Right ventricle myocardium inferior (tissue), 1 donor: ENCODE measurements at regions of chr14 and their contacts with region 1.

Region 1: DNA sequence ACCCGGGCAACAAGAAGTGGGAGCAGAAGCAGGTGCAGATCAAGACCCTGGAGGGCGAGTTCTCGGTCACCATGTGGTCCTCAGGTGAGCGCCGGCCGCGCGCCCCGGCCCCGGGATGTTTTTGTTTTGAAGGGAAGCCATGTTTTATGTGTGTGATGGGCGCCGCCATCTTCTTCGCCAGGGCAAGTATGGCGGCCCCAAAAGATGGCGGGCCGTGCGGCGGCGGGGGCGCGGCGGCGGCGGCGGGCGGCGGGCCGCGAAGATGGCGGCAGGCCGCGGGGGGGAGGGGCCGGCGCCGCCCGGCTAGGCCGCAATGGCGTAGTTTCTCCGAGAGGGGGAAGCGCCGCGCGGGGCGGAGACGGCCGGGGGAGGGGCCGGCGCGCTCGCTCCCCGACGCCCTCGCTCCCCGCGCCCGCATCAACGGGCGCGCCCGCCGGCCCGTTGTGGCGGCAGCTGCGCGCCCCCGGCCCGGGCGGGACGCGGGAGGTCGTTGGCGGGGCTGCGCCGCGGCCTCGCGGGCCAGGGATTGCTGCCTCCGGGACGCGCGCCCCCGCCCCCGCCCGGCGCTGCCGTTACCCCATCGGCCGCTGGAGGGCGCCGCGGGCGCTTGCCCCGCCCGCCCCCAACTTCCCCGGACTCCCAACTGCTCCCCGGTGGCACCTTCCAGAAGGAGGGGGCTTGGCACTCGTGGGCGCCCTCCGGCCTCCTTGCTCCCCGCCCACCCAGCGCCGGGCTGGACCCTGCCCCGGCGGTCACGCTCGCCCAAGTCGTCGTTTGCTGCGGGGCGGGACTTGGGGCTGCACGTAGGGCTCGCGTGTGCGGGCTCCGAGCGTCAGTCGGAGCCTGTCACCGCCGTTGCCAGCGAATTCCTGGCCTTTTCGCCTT is 1.1 kb downstream of the YY1 start:
- DNase-seq: peak; percentile 93
- ATAC-seq: peak; percentile 70

Region 2: DNA sequence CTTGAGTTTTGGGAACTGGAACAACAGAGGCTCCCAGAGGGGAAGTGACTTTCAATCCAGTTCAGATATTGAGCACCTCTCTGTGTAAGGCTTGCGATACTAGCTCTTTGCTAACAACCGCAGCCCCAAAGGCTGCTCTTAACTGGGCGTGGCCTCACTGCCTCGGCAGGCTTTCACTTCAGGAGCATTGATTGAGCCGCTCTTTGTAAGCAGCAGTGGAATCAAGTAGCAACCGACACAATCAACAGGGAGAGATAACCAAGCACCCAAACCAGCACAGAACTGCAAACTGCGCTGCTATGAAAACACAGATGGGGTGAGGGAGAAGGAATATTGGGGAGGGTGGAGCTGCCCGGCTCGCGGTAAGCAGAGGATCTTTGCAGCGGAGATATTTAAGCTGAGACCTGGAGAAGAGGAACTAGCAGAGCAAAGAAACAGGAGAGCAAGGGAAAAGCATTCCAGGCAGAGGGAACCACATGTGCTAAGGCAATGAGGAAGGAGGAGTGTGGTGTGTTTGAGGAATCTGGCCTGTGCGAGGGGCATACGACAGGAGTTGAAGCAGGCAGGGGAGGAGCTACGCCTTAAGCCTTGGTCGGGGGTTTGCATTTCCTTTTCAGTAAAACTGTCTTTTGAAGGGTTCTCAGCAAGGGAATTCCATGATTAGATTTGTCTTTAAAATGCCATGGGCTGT is 18.4 kb before region 1 on chr14:
- intact Hi-C with region 1: loop called (anchors 1 kb)
- DNase-seq: peak; percentile 66
- ATAC-seq: peak; percentile 70

Region 3: DNA sequence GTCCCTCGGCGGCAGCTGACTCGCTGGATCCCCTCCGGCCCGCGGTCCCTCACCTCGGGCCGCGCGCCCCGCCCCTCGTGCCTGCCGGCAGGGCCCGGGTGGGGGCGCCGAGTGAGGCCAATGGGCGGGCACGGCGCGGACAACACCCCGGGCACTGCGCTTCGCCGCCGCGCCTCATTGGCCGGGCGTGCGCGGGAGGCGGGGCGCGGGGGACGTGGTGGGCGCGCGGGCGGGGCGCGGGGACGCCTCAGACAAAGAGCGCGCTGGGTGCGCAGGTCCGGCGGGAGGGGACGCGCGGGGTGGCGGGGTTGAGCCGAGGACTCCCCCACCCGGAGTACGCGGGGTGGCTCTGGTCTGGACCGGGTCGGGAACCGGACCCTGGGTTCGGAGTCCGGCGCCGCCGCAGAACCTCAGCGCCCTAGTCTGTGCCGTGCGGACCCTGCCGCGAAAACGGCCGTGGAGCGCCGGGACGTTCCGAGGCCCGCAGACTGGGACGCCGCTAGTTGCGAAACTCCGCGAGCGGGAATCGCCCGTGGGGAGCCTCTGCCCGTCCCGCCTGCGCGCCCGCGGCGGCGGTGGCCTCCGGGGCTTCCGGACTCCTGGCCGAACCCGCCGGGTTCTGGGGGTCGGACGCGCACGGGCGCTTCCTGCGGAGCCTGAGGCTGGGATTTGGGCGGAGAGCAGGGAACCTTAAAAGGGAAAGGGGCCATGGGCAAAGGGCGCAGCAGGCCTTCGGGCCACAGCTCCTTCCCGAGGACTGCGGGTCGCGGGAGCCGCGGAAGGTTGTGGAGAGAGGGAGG is 66.5 kb after region 1 on chr14 and contains the start of gene SLC25A29:
- intact Hi-C with region 1: loop called (anchors 5 kb)
- DNase-seq: peak; percentile 94
- ATAC-seq: peak; percentile 94
- total RNA-seq, gene SLC25A29: 18.6 TPM

Region 4: DNA sequence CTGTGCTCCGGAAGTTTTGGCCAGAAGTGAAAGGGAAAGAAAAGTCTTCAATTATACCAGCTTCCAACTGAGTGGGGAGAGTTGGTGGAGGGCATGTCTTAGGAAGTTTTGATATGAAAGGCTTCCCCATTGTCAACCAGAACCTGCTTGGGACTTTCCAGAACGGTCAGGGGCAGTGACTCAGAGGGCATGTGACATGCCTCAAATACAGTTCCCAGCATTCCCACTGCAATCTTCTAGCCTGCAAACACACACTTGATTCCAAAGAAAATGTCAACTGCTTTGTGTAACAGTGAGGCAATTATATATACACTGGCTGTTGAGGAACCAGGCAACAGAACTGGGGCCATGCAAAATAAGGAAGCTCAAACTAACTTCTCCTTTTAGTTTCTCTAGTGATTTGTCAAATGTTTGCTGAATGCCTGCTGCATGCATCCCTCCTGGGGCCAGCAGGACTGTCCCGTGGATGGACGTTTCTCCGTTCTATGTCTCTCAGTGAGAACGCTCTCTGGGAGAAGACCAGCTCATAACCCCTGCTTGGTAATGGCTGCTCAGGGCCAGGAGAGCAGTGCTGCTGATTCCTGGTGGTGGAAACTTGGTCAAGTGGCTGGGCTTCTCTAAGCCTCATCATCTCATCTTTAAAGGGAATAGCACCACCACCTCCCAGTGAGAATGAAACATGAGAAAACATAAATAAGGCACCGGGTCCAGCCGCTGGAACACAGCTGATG is 101.4 kb after region 1 on chr14:
- intact Hi-C with region 1: no loop called
- DNase-seq: no peak
- ATAC-seq: peak; percentile 53

Region 5: DNA sequence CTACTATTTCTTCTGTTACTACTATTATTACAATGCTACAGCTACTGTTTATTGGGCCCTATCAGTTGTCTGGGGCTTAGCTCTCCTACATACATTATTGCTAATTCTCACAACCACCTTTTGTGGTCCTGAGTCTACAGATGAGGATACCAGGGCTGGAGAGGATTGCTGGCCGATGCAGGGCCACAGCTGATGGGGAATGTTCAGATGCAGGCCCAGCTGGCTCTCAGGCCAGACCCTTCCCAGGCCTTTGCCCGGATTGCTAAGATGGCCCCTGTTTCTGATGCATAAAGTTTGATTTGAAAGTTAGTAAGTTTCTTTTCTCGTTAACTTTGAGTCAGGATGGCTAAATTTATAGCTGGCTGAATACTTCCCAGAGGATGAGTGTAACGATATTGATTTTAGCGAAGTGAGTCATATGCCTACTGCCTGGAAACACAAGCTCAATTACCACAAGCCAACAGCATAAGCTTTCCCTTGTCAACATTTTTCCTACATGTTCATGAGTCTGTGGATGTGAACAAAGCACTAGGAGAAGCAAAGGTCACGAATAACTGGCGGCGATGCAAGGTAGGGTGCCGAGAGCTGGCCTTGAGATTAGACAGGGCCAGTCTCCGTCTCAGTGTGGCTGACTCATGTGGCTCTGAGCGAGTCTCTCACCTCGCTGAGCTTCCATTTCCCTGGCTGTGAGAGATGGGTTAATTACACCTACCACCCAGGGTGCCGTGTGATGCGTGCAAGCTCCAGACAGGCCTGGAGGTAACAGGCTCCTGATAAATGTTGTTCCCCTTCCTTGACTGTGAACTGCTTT is 236.1 kb after region 1 on chr14:
- intact Hi-C with region 1: no loop called
- DNase-seq: no peak
- ATAC-seq: no peak

Region 6: DNA sequence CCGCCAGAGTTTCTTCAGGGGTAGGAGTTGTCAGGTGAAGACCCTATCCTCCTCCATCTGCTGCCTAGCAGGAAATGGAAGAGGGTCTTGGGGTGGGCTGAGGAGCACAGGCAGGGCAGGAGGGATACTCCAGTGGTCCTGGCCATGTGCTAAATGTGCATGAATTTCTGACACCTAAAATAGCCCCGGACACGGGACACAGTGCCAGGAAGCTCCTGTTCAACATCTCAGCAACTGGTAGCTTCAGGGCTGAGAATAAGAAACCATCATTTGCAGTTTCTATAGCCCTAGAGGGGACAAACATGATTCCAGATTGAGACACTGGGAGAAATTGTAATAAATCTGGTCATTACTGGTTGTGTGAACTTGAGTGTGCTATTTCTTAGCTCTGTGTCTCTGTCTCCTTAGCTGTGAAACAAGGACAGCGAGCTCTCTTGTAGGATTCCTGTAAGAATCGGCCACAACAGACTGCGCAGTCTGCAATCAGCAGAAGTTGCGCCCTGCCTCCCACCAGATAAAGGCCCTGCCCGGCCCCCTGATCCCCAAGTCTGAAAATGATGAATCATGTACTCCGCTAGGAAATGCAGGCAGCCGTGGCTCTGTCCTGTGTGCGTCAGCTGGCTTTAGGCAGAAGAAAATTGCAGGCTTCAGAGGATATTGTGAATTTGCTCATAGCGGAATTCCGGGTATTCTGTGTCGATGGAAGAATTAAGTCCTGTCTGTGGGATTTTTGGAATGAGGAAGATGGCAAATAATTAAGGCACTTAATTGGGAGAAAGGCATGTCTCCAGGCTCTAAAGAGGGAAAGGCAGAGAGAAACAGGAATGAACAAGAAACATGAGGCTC is 550.6 kb after region 1 on chr14:
- intact Hi-C with region 1: no loop called
- DNase-seq: peak; percentile 28
- ATAC-seq: no peak